Activated T-helper 1 cell treated with anti-CD3 and anti-CD28 coated beads, Interleukin-12 subunit alpha, Interleukin-12 subunit beta, Interleukin-2, Interleukin-4 antibody, amounts not matched to agents 30 ng/mL and 10 ng/mL and 1 ng/mL, durations not matched to agents 14 hours and 24 hours and 36 hours (primary cell): ENCODE measurements at regions of chr16 and their contacts with region 1.

Region 1: GRCh38 chr16:81469710-81470535 is 25.3 kb downstream of the CMIP start:
- DNase-seq: peak; percentile 32
- H3K4me3 Mint-ChIP-seq: peak overlapping the region; percentile 59
- H3K27ac Mint-ChIP-seq: peak overlapping the region; percentile 84
- H3K4me1 Mint-ChIP-seq: peaks cover 60% of the 10 kb centered on the region
- H3K27me3 Mint-ChIP-seq: no peaks in the 10 kb centered on the region

Region 2: GRCh38 chr16:81413245-81413990 is 56.5 kb before region 1 on chr16:
- intact Hi-C with region 1: no loop called
- DNase-seq: no peak
- H3K4me3 Mint-ChIP-seq: no peak overlapping the region
- H3K27ac Mint-ChIP-seq: no peak overlapping the region
- H3K4me1 Mint-ChIP-seq: no peaks in the 10 kb centered on the region
- H3K27me3 Mint-ChIP-seq: peaks cover 10% of the 10 kb centered on the region

Region 3: DNA sequence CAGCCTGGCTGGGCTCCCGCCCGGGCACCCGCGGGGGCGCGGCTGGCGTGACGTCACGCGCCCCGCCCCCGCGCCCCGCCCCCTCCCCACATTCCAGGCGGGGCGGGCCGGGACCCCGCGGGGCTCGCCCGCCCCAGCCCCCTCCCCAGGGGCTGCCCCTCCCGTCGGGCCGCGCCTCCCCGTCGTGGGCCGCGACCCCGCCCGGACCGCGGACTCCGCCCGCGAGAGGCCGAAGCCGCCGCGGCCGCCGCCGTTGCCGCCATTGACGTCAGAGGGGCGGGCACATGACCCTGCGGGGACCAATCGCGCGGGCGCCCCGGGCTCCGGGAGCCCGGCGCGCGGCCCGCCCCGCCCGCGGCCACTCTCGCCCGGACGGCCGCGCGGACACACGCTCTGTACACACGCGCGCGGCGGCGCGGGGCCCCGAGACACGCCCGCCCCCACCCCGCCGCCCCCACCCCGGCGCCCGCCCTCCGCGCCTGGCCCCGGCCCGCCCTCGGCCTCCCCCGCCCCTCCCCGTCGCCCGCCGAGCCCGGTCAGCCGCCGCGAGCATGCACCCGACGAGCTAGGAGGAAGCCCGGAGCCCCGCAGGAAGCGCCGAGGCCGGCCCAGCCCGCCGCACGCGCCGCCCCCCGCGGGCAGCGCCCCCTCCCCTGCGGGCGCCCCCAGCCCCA is 25.3 kb before region 1 on chr16 and contains the start of gene CMIP:
- intact Hi-C with region 1: loop called (anchors 1 kb)
- DNase-seq: peak; percentile 78
- H3K4me3 Mint-ChIP-seq: peak within 1 kb of the TSS; percentile 88
- H3K27ac Mint-ChIP-seq: peak within 1 kb of the TSS; percentile 93
- H3K4me1 Mint-ChIP-seq: peaks cover 48% of the 10 kb centered on the region
- H3K27me3 Mint-ChIP-seq: peaks cover 28% of the 10 kb centered on the region
- total RNA-seq, gene CMIP: 45.4 and 45.8 TPM in 2 replicates